ENCODE measurements at regions of chr19 and their contacts with region 1.

Region 1: DNA sequence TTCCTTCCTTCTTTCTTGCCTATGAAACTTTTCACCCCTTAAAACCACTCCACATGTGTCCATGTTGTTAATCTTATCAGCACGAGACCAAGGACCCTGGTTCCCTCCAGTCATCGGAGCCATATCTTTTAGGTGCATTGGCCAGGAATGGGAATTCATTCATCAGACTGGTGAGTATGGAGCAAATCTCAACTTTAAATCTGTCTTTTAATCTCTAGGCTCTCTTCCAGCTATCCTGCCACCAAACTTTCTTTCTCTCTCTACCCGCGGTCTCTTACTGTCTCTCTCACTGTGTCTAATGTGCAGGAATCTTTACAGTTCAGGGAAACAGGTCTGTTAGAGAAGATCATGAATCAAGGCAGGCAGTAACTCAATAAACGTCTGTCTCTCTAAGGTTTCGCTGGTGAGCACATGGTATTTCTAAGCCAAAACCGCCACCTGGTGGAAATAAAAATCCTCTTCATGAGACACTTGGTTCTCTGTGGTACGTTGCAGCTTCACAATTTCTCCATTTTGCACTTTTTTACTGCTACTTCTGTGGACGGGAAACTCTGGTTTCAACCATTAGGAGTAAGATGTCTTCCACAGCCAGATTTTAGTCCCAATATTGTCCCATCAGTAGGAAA is 16.1 kb downstream of the LGALS16 start:
- DNase-seq: peak in 7 of 9 experiments; percentile 19 to 74 (median 46)
- ATAC-seq: peak; percentile 78
- H3K4me3 ChIP-seq: no peak overlapping the region
- H3K4me3 Mint-ChIP-seq: no peak overlapping the region
- H3K27ac ChIP-seq: no peak overlapping the region
- H3K27ac Mint-ChIP-seq: no peak overlapping the region
- H3K4me1 ChIP-seq: peaks cover 12% of the 10 kb centered on the region
- H3K4me1 Mint-ChIP-seq: peaks cover 7% of the 10 kb centered on the region
- H3K27me3 ChIP-seq: no peaks in the 10 kb centered on the region
- H3K27me3 Mint-ChIP-seq: peaks cover 13% of the 10 kb centered on the region
- CTCF ChIP-seq: peak; percentile 66

Region 2: DNA sequence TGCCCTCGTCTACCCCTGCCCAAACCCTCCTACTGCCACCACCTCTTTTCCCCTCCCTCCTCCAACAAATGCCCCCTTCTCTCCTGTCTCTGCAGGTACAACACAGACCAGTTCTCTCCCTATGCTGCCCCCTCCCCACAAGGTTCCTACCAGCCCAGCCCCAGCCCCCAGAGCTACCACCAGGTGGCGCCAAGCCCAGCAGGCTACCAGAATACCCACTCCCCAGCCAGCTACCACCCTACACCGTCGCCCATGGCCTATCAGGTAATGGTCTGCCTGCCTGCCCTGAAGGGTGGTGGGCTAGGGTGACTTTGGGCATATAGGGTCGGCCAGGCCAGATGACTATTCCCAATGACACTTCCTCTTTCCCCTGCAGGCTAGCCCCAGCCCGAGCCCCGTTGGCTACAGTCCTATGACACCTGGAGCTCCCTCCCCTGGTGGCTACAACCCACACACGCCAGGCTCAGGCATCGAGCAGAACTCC is 197.7 kb before region 1 on chr19:
- CTCF ChIA-PET with region 1: interaction called, 13 read pairs
- POLR2A ChIA-PET with region 1: no interaction called
- intact Hi-C with region 1: no loop called
- DNase-seq: peak; percentile 43 to 81 (median 75)
- ATAC-seq: peak; percentile 81
- H3K4me3 ChIP-seq: no peak overlapping the region
- H3K4me3 Mint-ChIP-seq: no peak overlapping the region
- H3K27ac ChIP-seq: no peak overlapping the region
- H3K27ac Mint-ChIP-seq: no peak overlapping the region
- H3K4me1 ChIP-seq: no peaks in the 10 kb centered on the region
- H3K4me1 Mint-ChIP-seq: no peaks in the 10 kb centered on the region
- H3K27me3 ChIP-seq: no peaks in the 10 kb centered on the region
- H3K27me3 Mint-ChIP-seq: no peaks in the 10 kb centered on the region
- CTCF ChIP-seq: peak; percentile 56

Region 3: GRCh38 chr19:39546599-39546998 is 125.3 kb before region 1 on chr19:
- CTCF ChIA-PET with region 1: interaction called, 84 read pairs
- POLR2A ChIA-PET with region 1: interaction called, 7 read pairs
- intact Hi-C with region 1: loop called (anchors 1 kb)
- DNase-seq: no peak
- ATAC-seq: no peak
- H3K4me3 ChIP-seq: no peak overlapping the region
- H3K4me3 Mint-ChIP-seq: no peak overlapping the region
- H3K27ac ChIP-seq: no peak overlapping the region
- H3K27ac Mint-ChIP-seq: no peak overlapping the region
- H3K4me1 ChIP-seq: peaks cover 32% of the 10 kb centered on the region
- H3K4me1 Mint-ChIP-seq: peaks cover 39% of the 10 kb centered on the region
- H3K27me3 ChIP-seq: no peaks in the 10 kb centered on the region
- H3K27me3 Mint-ChIP-seq: no peaks in the 10 kb centered on the region
- CTCF ChIP-seq: no peak

Region 4: GRCh38 chr19:39557441-39558151 is 114.3 kb before region 1 on chr19:
- CTCF ChIA-PET with region 1: interaction called, 84 read pairs
- POLR2A ChIA-PET with region 1: no interaction called
- intact Hi-C with region 1: no loop called
- DNase-seq: no peak
- ATAC-seq: peak; percentile 38
- H3K4me3 ChIP-seq: peak overlapping the region; percentile 2 to 25
- H3K4me3 Mint-ChIP-seq: peak overlapping the region; percentile 68
- H3K27ac ChIP-seq: peak overlapping the region in 1 of 2 experiments; percentile 72
- H3K27ac Mint-ChIP-seq: peak overlapping the region; percentile 75
- H3K4me1 ChIP-seq: peaks cover 16% of the 10 kb centered on the region
- H3K4me1 Mint-ChIP-seq: peaks cover 19% of the 10 kb centered on the region
- H3K27me3 ChIP-seq: no peaks in the 10 kb centered on the region
- H3K27me3 Mint-ChIP-seq: no peaks in the 10 kb centered on the region
- CTCF ChIP-seq: no peak

Region 5: DNA sequence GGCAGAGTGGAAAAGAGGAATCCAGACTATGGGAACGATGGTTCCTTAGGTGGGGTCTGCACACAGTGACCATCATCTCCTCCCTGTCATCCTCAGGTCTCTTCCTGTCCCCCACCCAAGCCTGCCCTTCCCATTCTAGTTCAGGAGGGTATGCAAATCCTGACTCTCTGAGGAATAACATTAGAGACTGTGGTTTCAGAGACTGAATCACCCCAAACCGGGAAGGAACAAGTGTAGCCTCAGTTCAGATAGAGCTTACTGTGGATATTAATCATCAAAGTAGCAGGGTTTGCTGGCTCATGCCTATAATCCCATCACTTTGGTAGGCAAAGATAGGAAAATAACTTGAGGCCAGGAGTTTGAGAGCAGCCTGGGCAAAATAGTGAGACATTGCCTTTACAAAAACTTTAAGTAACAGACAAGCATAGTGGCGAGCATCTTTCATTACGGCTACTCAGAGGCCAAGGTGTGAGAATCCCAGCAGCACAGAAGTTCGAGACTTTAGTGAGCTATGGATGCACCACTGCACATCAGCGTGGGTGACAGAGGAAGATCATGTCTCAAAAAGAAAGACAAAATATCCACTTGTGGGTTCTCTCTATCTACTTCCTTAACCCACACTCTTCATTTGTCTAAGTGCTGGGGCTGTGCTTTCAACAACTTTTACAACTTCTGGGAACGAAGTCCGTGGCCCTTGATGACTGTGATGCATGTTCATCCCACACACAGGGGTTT is 88.8 kb before region 1 on chr19:
- CTCF ChIA-PET with region 1: no interaction called
- POLR2A ChIA-PET with region 1: no interaction called
- intact Hi-C with region 1: no loop called
- DNase-seq: no peak
- ATAC-seq: no peak
- H3K4me3 ChIP-seq: no peak overlapping the region
- H3K4me3 Mint-ChIP-seq: no peak overlapping the region
- H3K27ac ChIP-seq: no peak overlapping the region
- H3K27ac Mint-ChIP-seq: no peak overlapping the region
- H3K4me1 ChIP-seq: no peaks in the 10 kb centered on the region
- H3K4me1 Mint-ChIP-seq: no peaks in the 10 kb centered on the region
- H3K27me3 ChIP-seq: peaks cover 0 to 4% of the 10 kb centered on the region in 2 experiments
- H3K27me3 Mint-ChIP-seq: peaks cover 48% of the 10 kb centered on the region
- CTCF ChIP-seq: no peak

Region 6: GRCh38 chr19:39661565-39661964 is 10.3 kb before region 1 on chr19:
- CTCF ChIA-PET with region 1: interaction called, 14 read pairs
- POLR2A ChIA-PET with region 1: no interaction called
- intact Hi-C with region 1: no loop called
- DNase-seq: no peak
- ATAC-seq: no peak
- H3K4me3 ChIP-seq: no peak overlapping the region
- H3K4me3 Mint-ChIP-seq: no peak overlapping the region
- H3K27ac ChIP-seq: no peak overlapping the region
- H3K27ac Mint-ChIP-seq: no peak overlapping the region
- H3K4me1 ChIP-seq: no peaks in the 10 kb centered on the region
- H3K4me1 Mint-ChIP-seq: no peaks in the 10 kb centered on the region
- H3K27me3 ChIP-seq: peaks cover 0 to 3% of the 10 kb centered on the region in 2 experiments
- H3K27me3 Mint-ChIP-seq: peaks cover 31% of the 10 kb centered on the region
- CTCF ChIP-seq: no peak

Region 7: GRCh38 chr19:39696418-39696817 is 24.6 kb after region 1 on chr19:
- CTCF ChIA-PET with region 1: no interaction called
- POLR2A ChIA-PET with region 1: no interaction called
- intact Hi-C with region 1: no loop called
- DNase-seq: no peak
- ATAC-seq: no peak
- H3K4me3 ChIP-seq: no peak overlapping the region
- H3K4me3 Mint-ChIP-seq: no peak overlapping the region
- H3K27ac ChIP-seq: no peak overlapping the region
- H3K27ac Mint-ChIP-seq: no peak overlapping the region
- H3K4me1 ChIP-seq: no peaks in the 10 kb centered on the region
- H3K4me1 Mint-ChIP-seq: no peaks in the 10 kb centered on the region
- H3K27me3 ChIP-seq: no peaks in the 10 kb centered on the region
- H3K27me3 Mint-ChIP-seq: peaks cover 46% of the 10 kb centered on the region
- CTCF ChIP-seq: no peak

Measured in CD8-positive, alpha-beta T cell (primary cell).